ENCODE measurements at regions of chr6 and their contacts with region 1.

Region 1: DNA sequence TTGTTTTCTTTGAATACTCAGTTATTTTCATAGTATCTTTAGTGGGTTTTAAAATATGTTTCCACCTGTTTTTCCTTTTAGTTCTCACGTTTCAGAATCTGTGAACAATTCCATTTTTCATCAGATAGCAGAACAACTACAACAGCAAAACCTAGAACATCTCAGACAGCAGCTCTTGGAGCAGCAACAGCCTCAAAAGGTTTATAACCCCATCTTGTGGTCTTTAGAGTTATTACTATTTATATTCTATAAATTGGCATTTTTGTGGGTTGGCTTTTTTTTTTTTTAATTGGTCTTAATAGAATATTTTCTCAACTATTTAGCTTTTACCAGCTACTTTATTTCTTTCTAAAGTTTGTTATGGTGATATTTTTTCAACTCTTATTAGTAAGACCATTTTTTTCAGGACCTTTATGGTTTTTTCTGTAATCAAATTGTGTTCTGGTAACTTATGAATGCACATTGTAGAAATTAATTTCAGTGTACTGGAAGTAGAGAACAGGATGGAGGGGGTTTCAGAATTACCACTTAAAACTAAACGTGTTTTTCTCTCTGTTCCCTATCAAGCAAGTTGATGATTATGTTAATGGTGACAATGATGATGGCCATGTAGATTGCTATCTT is 72.2 kb downstream of the SCAF8 start:
- DNase-seq: no peak
- H3K4me3 Mint-ChIP-seq: no peak overlapping the region
- H3K27ac Mint-ChIP-seq: no peak overlapping the region
- H3K4me1 Mint-ChIP-seq: no peaks in the 10 kb centered on the region
- H3K27me3 Mint-ChIP-seq: no peaks in the 10 kb centered on the region
- CTCF ChIP-seq: no peak

Region 2: DNA sequence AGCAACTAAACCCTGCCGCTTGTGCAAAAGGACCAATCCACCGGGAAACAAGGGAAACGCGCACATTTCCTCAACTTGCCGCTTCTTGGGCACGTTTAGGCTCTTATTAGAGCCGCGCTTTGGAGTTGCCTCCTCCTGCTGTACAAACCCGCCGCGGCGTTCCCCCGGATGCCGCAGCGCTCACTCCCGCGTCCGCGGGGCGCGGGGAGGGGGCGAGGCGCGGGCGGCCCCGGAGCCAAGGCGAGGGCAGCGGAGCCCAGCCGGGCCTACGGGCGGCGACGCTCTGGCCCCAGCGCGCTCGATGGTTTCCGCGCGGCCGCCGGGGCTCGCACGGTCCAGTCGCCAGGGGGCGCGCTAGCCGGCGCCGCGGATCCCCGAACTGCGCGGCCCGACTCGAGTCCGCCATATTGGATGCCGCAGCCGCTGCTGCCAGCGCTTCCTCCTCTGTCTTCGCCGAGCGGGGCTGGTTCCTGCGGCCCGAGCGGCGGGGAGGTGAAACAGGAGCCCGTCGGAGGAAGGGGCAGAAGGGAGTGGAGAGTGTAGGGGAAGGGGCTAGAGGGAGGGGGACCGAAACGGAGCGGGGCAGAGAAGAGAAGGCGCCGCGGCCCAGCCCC is 72.3 kb before region 1 on chr6 and contains the start of gene SCAF8:
- CTCF ChIA-PET with region 1: no interaction called
- intact Hi-C with region 1: loop called (anchors 5 kb)
- DNase-seq: peak; percentile 81
- H3K4me3 Mint-ChIP-seq: peak within 1 kb of the TSS; percentile 74
- H3K27ac Mint-ChIP-seq: peak within 1 kb of the TSS; percentile 91
- H3K4me1 Mint-ChIP-seq: peaks cover 11% of the 10 kb centered on the region
- H3K27me3 Mint-ChIP-seq: no peaks in the 10 kb centered on the region
- CTCF ChIP-seq: peak; percentile 71
- total RNA-seq, gene SCAF8: 28.0 and 28.6 TPM in 2 replicates